MCF 10A (cell line): ENCODE measurements at regions of chr3 and their contacts with region 1.

Region 1: DNA sequence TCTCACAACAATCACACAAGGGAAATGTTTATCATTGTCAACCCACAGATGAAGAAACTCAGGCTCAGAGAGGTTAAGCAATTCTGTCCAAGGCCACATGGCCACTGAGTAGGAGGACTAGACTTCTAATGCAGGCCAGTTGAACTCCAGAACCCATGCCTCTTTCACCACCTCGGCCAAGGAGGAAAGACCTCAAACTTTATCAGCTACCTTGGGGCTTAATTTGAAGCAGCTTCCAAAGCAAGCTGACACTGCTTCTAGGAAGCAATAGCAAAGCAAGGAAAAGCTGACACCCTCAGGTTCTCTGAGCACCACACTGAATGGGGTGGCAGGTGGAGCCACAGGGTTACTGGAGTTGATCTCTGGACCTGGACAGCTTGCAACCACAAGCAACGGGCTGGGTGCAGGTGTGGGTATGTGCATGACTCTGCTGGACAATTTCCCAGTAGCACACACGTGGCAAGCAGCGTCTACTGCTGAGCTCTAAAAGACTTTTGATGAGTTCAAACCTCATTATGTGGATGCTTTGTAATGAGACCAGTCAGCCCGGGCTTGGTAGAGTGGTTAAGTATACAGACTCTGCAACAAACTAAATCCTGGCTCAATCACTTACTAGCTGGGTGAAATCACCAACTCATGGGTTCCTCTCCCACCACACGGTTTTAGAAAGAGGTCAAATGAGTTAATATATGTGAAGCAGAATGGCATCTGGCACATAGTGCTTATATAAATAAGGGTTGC is 23.1 kb downstream of the CCNL1 start:
- DNase-seq: peak; percentile 35
- H3K4me3 Mint-ChIP-seq: no peak overlapping the region
- H3K27ac Mint-ChIP-seq: no peak overlapping the region
- H3K4me1 Mint-ChIP-seq: peaks cover 27% of the 10 kb centered on the region
- H3K27me3 Mint-ChIP-seq: no peaks in the 10 kb centered on the region
- CTCF ChIP-seq: no peak

Region 2: GRCh38 chr3:156509189-156510174 is 627.3 kb before region 1 on chr3:
- CTCF ChIA-PET with region 1: interaction called, 13 read pairs
- POLR2A ChIA-PET with region 1: no interaction called
- intact Hi-C with region 1: no loop called
- DNase-seq: peak; percentile 58
- H3K4me3 Mint-ChIP-seq: no peak overlapping the region
- H3K27ac Mint-ChIP-seq: no peak overlapping the region
- H3K4me1 Mint-ChIP-seq: no peaks in the 10 kb centered on the region
- H3K27me3 Mint-ChIP-seq: peaks cover 48% of the 10 kb centered on the region
- CTCF ChIP-seq: peak; percentile 43

Region 3: GRCh38 chr3:156554842-156555687 is 581.8 kb before region 1 on chr3 and contains the start of gene SSR3:
- CTCF ChIA-PET with region 1: interaction called, 12 read pairs
- POLR2A ChIA-PET with region 1: interaction called, 13 read pairs
- intact Hi-C with region 1: no loop called
- DNase-seq: peak; percentile 99
- H3K4me3 Mint-ChIP-seq: peak within 1 kb of the TSS; percentile 89
- H3K27ac Mint-ChIP-seq: peak within 1 kb of the TSS; percentile 92
- H3K4me1 Mint-ChIP-seq: peaks cover 30% of the 10 kb centered on the region
- H3K27me3 Mint-ChIP-seq: no peaks in the 10 kb centered on the region
- CTCF ChIP-seq: peak; percentile 8
- total RNA-seq, gene SSR3: 447 and 568 TPM in 2 replicates

Region 4: DNA sequence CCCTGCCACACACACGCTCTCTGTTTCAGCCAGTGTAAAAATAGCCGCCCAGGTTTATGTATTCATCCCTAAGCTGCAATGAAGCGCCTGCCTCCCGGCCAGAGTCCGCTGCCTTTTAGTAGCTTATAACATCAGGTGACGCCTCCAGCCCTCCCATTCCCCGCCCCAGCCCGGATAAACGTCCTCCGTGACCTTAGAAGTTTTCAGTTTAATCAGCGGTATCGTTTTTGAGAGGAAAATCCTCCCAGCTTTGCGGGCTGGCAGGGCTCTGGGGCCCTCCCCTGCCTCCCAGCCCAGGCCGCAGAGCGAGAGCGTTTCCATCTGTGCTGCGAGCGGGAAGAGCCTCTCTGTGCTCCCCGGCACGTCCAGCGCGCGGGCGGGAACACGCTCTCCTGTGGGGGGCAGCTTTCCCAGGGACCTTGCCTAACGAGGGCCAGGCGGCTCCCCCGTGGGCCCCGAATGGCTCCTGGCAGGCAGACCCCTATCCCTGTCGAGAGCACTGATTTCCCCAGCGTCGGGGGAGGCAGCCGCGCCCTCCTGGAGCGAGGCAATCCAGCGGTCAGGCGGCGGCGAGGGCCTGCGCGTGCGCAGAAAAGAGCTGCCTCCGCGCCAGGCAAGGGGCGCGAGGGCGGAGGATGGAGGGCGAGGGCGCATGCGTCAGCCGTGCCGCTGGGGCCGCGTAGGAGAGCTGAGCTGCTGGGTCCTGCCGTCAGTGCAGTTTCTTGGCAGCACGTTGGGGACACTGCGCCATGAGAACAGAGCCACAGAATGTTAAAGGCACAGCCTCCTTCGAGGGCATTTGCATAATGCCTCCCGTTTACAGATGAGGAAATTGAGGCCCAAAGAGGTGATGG is 48.0 kb before region 1 on chr3:
- CTCF ChIA-PET with region 1: interaction called, 260 read pairs
- POLR2A ChIA-PET with region 1: interaction called, 331 read pairs
- intact Hi-C with region 1: loop called (anchors 2 kb)
- DNase-seq: peak; percentile 87
- H3K4me3 Mint-ChIP-seq: peak overlapping the region; percentile 77
- H3K27ac Mint-ChIP-seq: peak overlapping the region; percentile 79
- H3K4me1 Mint-ChIP-seq: peaks cover 28% of the 10 kb centered on the region
- H3K27me3 Mint-ChIP-seq: no peaks in the 10 kb centered on the region
- CTCF ChIP-seq: no peak

Region 5: DNA sequence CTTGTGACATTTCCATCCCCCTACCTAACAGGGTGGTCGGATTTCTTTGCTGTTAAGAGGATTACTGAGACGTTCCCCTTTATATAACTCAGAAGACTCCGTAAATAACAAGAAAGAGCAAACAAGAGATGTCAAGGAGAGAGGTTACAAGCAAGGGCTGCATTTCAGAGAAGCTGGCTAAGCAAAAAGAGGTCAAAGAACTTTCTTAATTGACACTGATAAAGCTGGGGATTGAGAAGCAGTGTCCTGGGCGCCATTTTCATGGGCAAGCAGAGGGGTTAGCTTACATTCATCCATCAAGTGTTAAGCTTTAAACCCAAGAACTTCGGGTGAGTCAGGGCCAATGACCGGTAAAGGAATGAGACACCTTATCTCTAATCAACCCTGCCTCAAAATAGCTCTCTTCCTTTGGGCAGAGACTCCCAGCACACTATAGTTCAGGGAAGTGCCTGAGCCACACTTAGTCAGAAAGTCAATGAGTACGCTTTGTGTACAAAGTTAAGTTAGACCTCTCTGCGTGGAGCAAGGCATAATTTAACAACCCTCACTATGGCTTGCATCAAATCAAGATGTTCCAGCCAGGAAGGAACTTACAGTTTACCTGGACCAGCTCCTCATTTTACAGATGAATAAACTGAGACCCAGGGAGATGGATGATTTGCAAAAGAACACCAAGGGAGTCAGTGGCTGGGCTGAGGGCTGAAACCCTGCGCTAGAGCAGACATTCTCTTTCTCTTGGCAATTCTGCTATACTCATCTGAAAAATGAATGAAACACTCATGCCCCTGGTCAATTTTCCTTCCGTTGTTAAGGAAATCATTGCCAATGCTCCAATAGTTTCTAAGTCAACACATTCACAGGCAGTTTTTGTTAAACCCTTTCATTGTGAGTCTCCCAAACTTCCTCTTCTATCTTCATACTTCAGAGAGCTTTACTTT is 21.5 kb before region 1 on chr3:
- CTCF ChIA-PET with region 1: interaction called, 11 read pairs
- POLR2A ChIA-PET with region 1: interaction called, 3 read pairs
- intact Hi-C with region 1: no loop called
- DNase-seq: no peak
- H3K4me3 Mint-ChIP-seq: no peak overlapping the region
- H3K27ac Mint-ChIP-seq: no peak overlapping the region
- H3K4me1 Mint-ChIP-seq: peaks cover 5% of the 10 kb centered on the region
- H3K27me3 Mint-ChIP-seq: no peaks in the 10 kb centered on the region
- CTCF ChIP-seq: no peak

Region 6: DNA sequence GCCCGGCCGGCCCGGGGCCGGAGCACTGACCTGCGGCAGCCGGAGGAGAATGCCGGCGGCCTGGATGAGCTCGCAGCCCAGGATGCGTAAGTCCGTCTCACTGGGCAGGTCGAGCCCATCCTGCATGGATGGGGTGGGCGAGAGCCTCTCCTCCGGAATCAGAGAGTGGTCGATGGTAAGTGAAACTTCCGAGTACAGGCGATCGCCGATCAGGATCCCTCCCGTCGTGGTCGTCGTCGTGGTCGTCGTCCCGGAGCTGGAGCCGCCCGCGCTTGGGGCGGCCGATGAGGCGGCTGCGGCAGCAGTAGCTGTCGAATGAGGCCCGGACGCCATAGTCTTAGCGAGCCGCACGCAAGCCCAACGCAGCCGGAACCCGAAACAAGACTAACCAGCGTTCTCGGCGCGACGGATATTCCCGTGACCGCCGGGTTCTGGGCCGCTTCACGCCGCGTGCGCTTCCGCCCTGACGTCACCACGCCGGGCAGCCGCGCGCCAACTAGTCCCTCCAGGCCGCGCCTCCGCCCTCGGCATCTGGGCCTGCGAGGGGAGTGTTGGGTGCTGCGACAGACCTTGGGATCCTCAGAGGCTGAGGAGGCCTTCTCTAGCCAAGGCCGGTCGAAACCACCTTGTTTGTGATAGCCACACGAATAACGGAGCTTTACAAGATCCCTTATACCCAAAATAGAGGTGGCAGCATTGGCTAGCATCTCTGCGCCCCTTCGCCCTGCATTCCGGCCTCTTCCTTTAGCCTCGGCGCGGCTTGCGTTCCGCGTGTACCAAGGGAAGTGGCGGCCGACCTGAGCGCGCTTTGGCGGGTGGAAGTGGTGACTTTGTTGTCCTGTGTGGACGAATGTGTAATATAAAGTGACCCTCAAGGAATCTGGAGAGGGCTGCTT is 23.2 kb after region 1 on chr3 and contains the start of gene CCNL1:
- CTCF ChIA-PET with region 1: interaction called, 9 read pairs
- POLR2A ChIA-PET with region 1: interaction called, 21 read pairs
- intact Hi-C with region 1: no loop called
- DNase-seq: peak; percentile 97
- H3K4me3 Mint-ChIP-seq: peak within 1 kb of the TSS; percentile 97
- H3K27ac Mint-ChIP-seq: peak within 1 kb of the TSS; percentile 100
- H3K4me1 Mint-ChIP-seq: peaks cover 19% of the 10 kb centered on the region
- H3K27me3 Mint-ChIP-seq: no peaks in the 10 kb centered on the region
- CTCF ChIP-seq: no peak
- total RNA-seq, gene CCNL1: 103 and 112 TPM in 2 replicates

Region 7: GRCh38 chr3:157961665-157962064 is 824.8 kb after region 1 on chr3:
- CTCF ChIA-PET with region 1: no interaction called
- POLR2A ChIA-PET with region 1: no interaction called
- intact Hi-C with region 1: no loop called
- DNase-seq: no peak
- H3K4me3 Mint-ChIP-seq: no peak overlapping the region
- H3K27ac Mint-ChIP-seq: no peak overlapping the region
- H3K4me1 Mint-ChIP-seq: no peaks in the 10 kb centered on the region
- H3K27me3 Mint-ChIP-seq: no peaks in the 10 kb centered on the region
- CTCF ChIP-seq: no peak